Posterior vena cava (tissue), 2 donors: ENCODE measurements at regions of chr17 and their contacts with region 1.

Region 1: DNA sequence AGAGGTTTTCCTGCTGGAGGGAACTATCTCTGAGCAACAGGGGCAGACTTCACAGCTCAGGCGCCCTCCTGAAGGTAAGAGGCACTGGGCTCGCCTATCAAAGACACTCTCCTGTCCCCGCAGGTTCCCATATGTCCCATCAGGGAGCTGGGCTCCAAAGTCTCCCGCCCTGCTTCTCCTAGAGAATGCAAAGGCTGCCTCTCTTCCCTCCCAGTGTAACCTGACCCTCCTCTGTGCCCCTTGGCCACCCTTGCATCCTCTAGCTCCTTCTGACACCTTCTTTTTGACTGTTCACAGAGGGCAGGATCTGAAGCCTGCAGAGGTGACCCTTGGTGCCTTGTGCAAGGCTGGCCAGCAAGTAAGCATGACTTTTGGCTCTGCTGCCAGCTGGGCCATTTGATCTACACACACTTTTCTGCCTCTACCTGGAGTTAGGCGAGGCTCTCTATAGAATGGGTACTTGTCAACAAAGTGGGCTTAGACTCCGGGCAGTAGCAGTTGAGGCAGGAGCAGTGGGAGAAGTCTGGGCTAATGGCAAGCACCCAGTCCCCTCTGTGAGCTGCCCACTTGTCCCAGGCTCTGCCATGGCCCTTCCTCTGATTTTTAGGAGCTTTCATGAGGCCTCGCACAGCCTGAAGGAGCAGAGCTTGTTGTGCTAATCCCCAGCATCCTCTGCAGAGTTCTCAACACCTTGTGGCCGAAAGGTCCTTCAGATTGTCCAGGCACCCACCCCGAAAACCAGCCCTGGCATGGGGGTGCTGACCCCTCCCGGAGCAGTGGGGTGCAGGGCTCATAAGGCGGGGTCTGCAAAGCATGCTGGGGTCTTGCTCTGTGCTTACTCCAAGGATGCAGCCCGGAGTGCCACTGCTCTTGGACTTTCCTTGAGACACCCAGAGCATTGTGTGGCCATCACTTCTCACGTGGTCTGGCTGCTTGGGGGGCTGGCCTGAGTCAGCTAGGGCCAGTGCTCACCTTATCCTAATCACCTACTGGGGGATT is 122.9 kb downstream of the METRNL start:
- DNase-seq: peak; percentile 75

Region 2: DNA sequence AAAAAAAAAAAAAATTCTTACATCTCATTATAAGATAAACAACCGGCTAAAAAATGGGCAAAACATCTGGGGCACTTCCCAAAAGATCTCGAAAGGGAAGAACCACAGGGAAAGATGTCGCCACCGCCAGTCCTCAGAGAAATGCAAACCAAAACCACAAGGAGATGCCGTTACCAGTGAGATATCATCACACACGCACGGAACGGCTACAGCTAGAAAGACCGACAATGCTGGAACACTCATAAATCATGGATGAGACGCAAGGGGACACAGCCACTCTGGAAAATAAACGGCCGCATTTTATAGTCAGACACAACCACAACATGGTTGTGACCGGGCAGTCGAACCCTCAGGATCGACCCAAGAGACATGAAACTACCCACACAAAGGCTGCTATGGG is 578.6 kb before region 1 on chr17:
- intact Hi-C with region 1: no loop called
- DNase-seq: no peak

Region 3: DNA sequence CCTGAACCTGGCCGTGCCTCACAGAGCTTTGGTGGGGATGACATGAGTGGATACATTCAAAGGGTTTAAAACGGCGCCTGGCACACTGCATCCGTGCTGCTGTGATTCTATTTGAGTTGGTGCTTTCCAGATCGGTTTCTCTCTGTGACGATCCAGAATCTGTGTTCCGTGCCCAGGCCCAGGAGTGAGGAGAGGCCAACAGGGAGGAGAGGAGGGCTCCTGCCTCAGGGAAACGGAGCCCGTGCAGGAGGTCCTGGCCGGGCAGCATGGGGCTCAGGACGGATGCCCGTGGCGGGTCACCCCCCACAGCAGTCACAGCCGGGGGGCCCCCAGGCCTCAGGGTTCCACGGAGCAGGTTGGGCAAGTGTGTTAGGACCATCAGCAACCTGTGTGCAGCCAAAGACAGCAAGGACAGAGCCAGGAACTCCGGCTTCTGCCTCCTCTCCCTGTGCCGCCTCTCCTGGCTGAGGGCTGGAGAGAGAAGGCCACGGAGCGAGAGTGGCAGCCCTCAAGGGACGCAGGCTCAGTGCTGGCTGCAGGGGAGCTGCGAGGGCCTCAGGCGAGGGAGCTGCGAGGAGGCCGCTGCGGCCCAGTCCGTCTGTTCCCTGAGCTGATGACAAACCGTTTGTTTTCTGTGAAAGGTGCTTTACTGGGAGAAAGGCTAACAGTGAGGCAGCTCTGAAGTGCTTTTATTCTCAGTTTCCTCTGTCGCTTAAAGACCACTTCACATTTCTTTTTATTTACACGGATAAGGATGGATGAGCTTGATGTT is 23.6 kb before region 1 on chr17:
- intact Hi-C with region 1: loop called in 1 of 2 experiments (anchors 1 kb)
- DNase-seq: peak; percentile 72